ENCODE measurements at regions of chr6 and their contacts with region 1.

Region 1: DNA sequence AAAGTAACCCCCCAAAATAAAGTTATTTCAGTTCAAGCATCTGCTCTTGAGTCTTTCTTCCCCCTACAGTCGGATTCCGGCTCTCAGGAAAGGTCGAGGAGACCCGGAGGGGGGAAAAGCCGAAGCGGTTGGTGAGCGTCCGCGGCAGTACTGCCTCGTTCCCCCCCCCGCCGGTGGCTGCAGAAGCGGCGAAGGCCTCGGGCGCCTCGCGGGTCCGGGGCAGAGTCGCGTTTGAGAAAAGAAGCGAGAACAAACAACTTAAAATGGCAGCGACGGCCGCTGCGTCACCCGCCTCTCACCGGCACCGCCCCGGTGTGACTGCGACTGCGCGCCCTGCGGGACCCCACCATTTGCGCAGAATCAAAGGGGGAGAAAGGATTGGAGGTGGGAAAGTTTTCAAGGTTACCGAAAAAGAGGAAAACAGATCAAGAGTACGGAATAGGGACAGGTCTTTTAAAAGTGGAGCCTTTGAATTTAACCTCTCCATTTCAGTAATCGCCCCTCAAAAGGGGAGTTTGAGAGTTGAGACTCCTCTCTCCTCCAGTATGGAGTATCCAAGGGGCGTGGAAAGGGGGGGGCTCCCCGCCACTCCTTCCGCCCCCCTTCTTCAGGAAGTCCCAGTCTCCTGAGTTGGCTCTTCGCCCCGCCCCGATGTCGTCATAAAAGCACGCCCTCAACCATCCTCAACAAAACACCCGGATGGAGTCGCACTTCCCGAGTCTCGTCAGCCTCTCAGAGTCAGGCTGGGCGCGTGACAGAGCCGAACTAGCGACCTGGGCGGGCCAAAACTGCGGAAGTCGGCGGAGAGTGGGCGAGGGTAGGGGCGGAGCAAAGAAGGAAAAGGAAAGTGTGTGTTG is 1.9 kb upstream of the C6orf62 start:
- H3K4me3 Mint-ChIP-seq: peak overlapping the region; percentile 99
- H3K27ac Mint-ChIP-seq: peak overlapping the region; percentile 98
- H3K4me1 Mint-ChIP-seq: peaks cover 23% of the 10 kb centered on the region
- H3K27me3 Mint-ChIP-seq: no peaks in the 10 kb centered on the region

Region 2: DNA sequence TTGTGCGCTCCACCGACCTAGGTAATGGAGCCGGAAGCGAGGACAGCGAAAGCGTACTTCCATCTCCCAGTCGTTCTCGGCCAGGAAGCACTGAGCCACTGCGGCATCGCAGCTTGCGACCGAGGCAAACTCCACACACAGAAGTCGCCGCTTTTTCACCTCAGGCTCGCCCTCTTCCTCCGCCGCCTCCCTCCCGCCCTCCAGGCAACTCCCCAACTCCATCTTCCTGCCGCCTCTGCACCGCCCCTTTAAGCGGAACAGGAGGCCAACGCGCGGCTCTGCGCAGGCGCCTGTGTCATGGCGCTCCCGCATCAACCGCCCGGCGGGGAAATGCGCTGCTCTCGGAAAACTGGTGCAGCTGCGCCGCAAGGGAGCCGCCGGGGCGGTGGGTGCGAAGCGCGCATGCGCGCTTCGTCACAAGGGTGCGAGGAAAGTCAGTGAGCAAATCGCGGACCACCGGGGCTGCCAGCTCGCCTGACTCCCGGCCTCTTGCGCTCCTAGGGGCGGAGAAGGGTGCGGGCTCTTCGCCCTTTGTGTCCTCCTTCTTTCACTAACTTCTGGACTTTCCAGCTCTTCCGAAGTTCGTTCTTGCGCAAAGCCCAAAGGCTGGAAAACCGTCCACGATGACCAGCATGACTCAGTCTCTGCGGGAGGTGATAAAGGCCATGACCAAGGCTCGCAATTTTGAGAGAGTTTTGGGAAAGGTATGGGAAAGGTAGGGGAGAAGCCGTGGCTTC is 54.0 kb before region 1 on chr6 and contains the starts of genes ACOT13 and TDP2:
- intact Hi-C with region 1: loop called (anchors 2 kb)
- H3K4me3 Mint-ChIP-seq: peak within 1 kb of the TSS; percentile 94
- H3K27ac Mint-ChIP-seq: peak within 1 kb of the TSS; percentile 88
- H3K4me1 Mint-ChIP-seq: peaks cover 60% of the 10 kb centered on the region
- H3K27me3 Mint-ChIP-seq: no peaks in the 10 kb centered on the region

Region 3: GRCh38 chr6:24734166-24734565 is 13.3 kb after region 1 on chr6:
- intact Hi-C with region 1: loop called (anchors 1 kb)
- H3K4me3 Mint-ChIP-seq: no peak overlapping the region
- H3K27ac Mint-ChIP-seq: peak overlapping the region; percentile 63
- H3K4me1 Mint-ChIP-seq: peaks cover 33% of the 10 kb centered on the region
- H3K27me3 Mint-ChIP-seq: no peaks in the 10 kb centered on the region

Region 4: GRCh38 chr6:24744911-24745310 is 24.1 kb after region 1 on chr6:
- intact Hi-C with region 1: loop called (anchors 1 kb)
- H3K4me3 Mint-ChIP-seq: no peak overlapping the region
- H3K27ac Mint-ChIP-seq: peak overlapping the region; percentile 99
- H3K4me1 Mint-ChIP-seq: peaks cover 78% of the 10 kb centered on the region
- H3K27me3 Mint-ChIP-seq: no peaks in the 10 kb centered on the region

Region 5: GRCh38 chr6:24766680-24767462 is 46.0 kb after region 1 on chr6:
- intact Hi-C with region 1: loop called (anchors 1 kb)
- H3K4me3 Mint-ChIP-seq: no peak overlapping the region
- H3K27ac Mint-ChIP-seq: no peak overlapping the region
- H3K4me1 Mint-ChIP-seq: peaks cover 12% of the 10 kb centered on the region
- H3K27me3 Mint-ChIP-seq: no peaks in the 10 kb centered on the region

Region 6: GRCh38 chr6:24774696-24775519 is 54.1 kb after region 1 on chr6 and contains the start of gene GMNN:
- intact Hi-C with region 1: loop called (anchors 2 kb)
- H3K4me3 Mint-ChIP-seq: peak within 1 kb of the TSS; percentile 99
- H3K27ac Mint-ChIP-seq: peak within 1 kb of the TSS; percentile 95
- H3K4me1 Mint-ChIP-seq: peaks cover 26% of the 10 kb centered on the region
- H3K27me3 Mint-ChIP-seq: no peaks in the 10 kb centered on the region

Region 7: GRCh38 chr6:25085756-25086155 is 364.9 kb after region 1 on chr6:
- intact Hi-C with region 1: no loop called
- H3K4me3 Mint-ChIP-seq: no peak overlapping the region
- H3K27ac Mint-ChIP-seq: no peak overlapping the region
- H3K4me1 Mint-ChIP-seq: no peaks in the 10 kb centered on the region
- H3K27me3 Mint-ChIP-seq: no peaks in the 10 kb centered on the region

Measured in dendritic cell treated with granulocyte-macrophage colony-stimulating factor and Interleukin-4, amounts not matched to agents 40 ng/mL and 50 ng/mL, for 4 days (primary cell).